ENCODE measurements at regions of chr2 and their contacts with region 1.

Region 1: DNA sequence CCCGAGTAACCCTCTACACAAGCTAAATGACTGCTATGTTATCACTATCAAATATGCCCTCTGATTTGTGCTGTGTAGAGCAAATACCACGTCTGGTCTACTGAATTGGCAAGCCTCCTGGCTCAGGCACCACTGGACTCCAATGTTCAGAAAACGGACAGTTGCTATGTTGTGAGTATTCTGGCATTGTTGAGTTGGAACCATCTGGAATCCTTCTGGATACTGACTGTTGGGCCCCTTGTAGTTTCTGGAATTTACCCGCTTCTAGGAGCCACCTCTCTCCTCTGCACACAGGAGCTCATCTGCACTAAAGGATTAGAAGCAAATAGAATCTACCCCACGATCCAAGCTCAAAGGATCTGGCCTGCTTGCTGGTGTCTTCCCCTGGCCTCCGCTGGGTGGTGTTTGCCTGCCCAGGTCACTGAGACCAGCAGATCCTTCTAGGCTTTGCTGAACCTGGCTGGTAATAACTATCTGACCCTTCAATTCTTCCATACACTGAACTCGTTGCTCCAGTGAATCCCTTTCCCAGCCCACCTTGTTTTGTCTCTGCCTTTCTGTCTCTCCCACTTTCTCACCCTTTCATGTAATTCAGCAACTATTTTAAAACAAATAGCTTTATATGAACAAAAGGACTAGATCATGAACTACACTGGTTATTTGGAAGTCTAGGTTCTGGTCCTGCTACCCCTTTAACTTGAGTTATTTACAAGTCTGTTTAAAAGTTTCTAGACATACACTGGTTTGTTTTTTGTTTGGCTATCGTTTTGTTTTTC is 2.1 kb upstream of the HAAO start:
- DNase-seq: peak; percentile 32
- ATAC-seq: peak; percentile 86
- H3K4me3 ChIP-seq: no peak overlapping the region
- H3K27ac ChIP-seq: no peak overlapping the region
- H3K4me1 ChIP-seq: no peaks in the 10 kb centered on the region
- H3K27me3 ChIP-seq: no peaks in the 10 kb centered on the region
- CTCF ChIP-seq: peak; percentile 85

Region 2: DNA sequence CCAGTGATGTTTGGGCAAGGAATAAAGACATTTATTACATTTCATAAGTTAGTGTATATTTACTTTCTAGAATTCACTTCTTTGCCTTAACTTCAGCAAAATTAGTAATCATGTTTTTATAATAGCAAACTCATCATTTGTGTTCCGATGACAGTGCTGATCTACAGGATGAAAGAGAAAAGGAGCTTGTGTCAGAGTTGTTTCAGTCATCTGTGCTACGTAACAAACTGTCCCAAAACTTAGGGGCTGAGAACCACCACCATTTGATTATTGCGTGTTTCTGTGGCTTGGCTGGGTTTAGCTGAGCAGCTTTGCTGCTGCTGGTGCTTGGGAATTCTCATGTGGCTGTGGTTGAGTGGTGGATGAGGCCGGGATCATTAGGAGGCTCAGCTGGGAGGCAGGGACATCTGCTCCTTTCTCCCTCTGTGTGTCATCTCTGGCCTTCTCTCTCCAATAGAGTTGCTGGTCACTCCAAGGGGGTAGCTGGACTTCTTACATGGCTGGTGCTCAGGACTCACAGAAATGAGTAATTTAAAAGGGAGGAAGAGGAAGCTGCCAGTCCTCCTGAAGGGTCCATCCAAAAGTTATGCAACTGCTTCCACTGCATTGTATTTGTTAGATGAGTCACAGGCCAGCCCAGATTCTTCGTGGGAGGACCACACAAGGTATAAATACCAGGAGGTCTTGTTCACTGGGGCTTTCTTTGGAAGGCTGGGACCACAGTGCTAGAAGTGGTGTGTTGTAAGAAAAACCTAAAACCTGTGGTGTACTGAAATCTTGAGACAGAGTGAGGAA is 41.3 kb after region 1 on chr2:
- CTCF ChIA-PET with region 1: interaction called, 11 read pairs
- POLR2A ChIA-PET with region 1: no interaction called
- in situ Hi-C with region 1: no loop called
- intact Hi-C with region 1: no loop called
- DNase-seq: no peak
- ATAC-seq: no peak
- H3K4me3 ChIP-seq: no peak overlapping the region
- H3K27ac ChIP-seq: no peak overlapping the region
- H3K4me1 ChIP-seq: no peaks in the 10 kb centered on the region
- H3K27me3 ChIP-seq: no peaks in the 10 kb centered on the region
- CTCF ChIP-seq: no peak

Region 3: DNA sequence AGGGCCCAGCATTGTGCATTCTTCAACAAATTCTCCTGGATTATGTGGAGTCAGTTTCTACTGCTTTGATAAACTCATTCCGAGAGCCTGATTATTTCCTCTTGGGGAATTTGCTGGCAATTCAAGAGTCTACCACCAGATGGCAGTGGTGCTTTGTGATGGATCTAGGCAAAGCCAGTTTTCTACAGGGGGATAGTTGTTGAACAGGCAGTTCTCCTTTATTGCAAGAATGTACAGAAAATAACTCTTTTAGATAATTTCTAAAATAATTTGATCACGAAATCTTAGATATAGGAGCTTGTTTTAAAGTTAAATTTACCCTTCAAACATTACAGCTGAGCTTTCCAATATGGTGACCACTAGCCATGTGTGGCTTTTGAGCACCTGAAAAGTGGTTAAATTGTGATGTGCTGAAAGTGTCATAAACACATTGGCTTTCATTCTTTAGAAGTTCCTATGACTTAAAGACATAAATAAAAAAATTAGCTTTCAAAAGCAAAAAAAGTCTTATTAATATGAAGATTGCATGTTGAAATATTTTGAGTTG is 64.6 kb after region 1 on chr2:
- CTCF ChIA-PET with region 1: interaction called, 17 read pairs
- POLR2A ChIA-PET with region 1: no interaction called
- in situ Hi-C with region 1: no loop called
- intact Hi-C with region 1: no loop called
- DNase-seq: peak; percentile 67
- ATAC-seq: no peak
- H3K4me3 ChIP-seq: no peak overlapping the region
- H3K27ac ChIP-seq: no peak overlapping the region
- H3K4me1 ChIP-seq: no peaks in the 10 kb centered on the region
- H3K27me3 ChIP-seq: no peaks in the 10 kb centered on the region
- CTCF ChIP-seq: peak; percentile 91

Region 4: DNA sequence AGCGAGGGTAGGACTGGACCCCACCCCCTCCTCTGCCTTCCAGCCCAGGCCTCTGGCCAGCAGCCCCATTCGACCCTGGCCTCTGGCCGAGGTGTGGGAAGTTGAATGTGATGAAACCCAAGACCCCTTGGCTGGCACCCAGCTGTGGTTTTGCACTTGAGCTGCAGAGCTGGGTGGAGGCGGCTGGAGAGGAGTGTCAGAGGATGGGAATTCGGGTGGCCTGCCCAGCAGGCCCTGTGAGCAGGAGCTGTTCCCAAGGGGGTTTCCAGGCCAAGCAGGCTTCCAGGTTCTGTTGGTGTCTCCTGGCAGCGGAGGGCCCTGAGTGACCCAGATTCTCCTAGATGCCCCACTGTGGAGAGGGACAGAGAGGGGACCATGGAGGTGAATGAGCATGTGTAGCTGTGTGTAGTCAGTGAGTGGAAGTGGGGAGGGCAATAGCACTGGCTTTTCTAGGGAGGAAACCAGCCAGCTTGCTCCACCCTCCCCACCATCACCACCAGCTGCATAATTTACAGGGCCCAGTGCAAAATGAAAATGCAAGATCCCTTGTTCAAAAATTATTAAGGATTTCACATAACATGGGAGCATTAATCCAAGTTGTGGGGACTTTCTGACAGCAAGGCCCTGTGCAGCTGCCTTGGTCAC is 170.1 kb after region 1 on chr2:
- CTCF ChIA-PET with region 1: no interaction called
- POLR2A ChIA-PET with region 1: no interaction called
- in situ Hi-C with region 1: no loop called
- intact Hi-C with region 1: no loop called
- DNase-seq: no peak
- ATAC-seq: no peak
- H3K4me3 ChIP-seq: no peak overlapping the region
- H3K27ac ChIP-seq: no peak overlapping the region
- H3K4me1 ChIP-seq: no peaks in the 10 kb centered on the region
- H3K27me3 ChIP-seq: no peaks in the 10 kb centered on the region
- CTCF ChIP-seq: no peak

Measured in Panc1 (cell line).